ENCODE measurements at regions of chr5 and their contacts with region 1.

Region 1: DNA sequence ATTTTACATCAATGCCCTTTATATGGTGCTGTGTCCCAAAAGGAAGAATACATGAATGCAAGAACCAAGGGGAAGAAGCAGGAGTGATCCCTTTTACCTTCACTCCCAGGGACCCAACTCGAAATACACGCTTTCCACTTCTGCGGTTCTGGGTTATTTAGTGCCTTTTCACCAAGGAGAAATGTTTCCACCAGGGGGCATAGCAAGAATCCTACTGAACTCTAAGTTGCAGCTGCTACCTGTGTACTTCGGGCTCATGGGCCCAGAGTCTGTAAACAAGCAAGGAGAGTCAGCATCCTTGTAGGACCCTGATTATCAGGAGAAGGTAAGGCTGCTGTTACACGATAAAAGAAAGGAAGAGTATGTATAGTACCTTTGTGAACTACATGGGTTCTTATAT is 45.7 kb downstream of the DPYSL3 start:
- DNase-seq: peak; percentile 23
- CTCF ChIP-seq: no peak

Region 2: GRCh38 chr5:147303251-147303650 is 161.0 kb before region 1 on chr5:
- in situ Hi-C with region 1: no loop called
- DNase-seq: no peak
- CTCF ChIP-seq: no peak

Region 3: DNA sequence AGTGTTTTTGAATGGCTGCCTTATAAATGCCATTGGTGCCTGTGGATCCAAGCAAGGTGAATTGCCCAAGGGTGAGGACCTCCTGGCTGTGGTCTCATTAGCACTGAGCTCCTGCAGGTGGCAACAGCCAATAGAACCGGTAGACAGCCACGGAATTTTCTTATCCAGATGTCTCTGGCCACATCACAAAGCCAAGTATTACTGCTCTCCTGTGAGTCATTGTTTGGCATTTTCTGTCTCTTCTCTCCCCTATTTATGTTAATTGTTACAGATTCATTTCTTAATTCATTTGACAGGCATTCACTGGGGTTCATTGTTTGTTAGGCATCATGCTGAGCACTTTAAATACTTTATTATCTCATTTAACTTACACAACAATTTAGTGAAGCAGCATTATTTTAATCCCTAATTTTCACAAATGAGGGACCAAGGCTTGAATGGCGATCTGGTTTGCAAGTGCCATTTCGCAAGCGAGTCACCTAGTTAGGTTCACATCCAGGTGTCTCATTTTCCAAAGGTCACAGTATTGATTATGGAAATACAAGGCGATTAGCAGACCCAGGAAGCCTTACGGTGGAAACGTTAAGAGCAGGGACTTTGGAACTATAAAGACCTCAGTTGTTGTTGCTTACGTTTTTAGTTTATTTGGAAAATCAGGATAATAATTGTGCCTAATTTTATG is 103.8 kb after region 1 on chr5:
- in situ Hi-C with region 1: loop called (anchors 10 kb)
- DNase-seq: no peak
- CTCF ChIP-seq: no peak

Measured in GM13976 (cell line).